SK-N-SH (cell line): ENCODE measurements at regions of chr16 and their contacts with region 1.

Region 1: DNA sequence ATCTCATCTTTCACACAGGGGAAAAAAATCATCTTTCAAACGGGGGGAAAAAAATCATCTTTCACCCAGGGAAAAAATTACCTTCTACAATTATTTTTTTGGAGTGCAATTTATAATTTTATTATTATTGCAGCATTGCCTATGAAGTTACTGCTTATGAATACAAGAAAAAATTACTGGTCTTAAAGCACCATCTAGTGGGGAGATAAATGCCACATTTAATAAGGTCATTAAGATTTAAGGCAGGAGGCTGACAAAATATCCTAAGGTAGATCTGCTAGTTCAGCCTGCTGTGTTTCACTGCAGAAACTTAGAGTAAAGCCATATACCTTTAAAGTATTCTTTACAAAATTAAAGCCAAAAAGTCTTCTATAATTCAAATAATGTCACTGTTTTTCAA is 13.7 kb downstream of the SHCBP1 start:
- DNase-seq: no peak
- H3K4me3 ChIP-seq: no peak overlapping the region
- H3K27ac ChIP-seq: no peak overlapping the region
- H3K4me1 ChIP-seq: no peaks in the 10 kb centered on the region
- H3K27me3 ChIP-seq: no peaks in the 10 kb centered on the region
- CTCF ChIP-seq: peak; percentile 70
- EP300 ChIP-seq: no peak
- RAD21 ChIP-seq: peak; percentile 71

Region 2: DNA sequence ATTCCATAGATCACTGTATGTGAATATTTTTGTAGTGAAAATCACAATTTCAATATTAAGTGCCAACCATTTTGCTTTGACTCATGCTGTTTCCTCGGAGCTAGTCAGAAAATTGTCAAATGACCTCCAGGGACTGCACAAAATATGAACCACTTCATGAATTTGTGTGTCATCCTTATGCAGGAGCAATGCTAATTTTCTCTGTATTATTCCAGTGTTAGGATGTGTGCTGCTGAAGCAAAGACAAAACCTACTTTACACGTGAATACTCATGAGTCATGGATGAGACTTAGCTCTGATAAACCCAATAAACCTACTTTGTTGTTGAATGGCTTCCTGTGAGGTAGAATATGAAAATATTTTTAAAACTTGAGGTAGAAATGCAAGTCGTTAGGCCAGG is 51.6 kb before region 1 on chr16:
- CTCF ChIA-PET with region 1: interaction called, 86 read pairs
- POLR2A ChIA-PET with region 1: no interaction called
- DNase-seq: no peak
- H3K4me3 ChIP-seq: no peak overlapping the region
- H3K27ac ChIP-seq: no peak overlapping the region
- H3K4me1 ChIP-seq: peaks cover 0 to 2% of the 10 kb centered on the region in 2 experiments; a peak in 1 of 4 replicates
- H3K27me3 ChIP-seq: no peaks in the 10 kb centered on the region; the same call in 1 of the 2 replicates
- CTCF ChIP-seq: no peak
- EP300 ChIP-seq: no peak
- RAD21 ChIP-seq: no peak

Region 3: GRCh38 chr16:46583036-46583435 is 24.5 kb before region 1 on chr16:
- CTCF ChIA-PET with region 1: interaction called, 10 read pairs
- POLR2A ChIA-PET with region 1: no interaction called
- DNase-seq: no peak
- H3K4me3 ChIP-seq: no peak overlapping the region
- H3K27ac ChIP-seq: no peak overlapping the region
- H3K4me1 ChIP-seq: no peaks in the 10 kb centered on the region
- H3K27me3 ChIP-seq: no peaks in the 10 kb centered on the region
- CTCF ChIP-seq: no peak
- EP300 ChIP-seq: no peak
- RAD21 ChIP-seq: no peak

Region 4: DNA sequence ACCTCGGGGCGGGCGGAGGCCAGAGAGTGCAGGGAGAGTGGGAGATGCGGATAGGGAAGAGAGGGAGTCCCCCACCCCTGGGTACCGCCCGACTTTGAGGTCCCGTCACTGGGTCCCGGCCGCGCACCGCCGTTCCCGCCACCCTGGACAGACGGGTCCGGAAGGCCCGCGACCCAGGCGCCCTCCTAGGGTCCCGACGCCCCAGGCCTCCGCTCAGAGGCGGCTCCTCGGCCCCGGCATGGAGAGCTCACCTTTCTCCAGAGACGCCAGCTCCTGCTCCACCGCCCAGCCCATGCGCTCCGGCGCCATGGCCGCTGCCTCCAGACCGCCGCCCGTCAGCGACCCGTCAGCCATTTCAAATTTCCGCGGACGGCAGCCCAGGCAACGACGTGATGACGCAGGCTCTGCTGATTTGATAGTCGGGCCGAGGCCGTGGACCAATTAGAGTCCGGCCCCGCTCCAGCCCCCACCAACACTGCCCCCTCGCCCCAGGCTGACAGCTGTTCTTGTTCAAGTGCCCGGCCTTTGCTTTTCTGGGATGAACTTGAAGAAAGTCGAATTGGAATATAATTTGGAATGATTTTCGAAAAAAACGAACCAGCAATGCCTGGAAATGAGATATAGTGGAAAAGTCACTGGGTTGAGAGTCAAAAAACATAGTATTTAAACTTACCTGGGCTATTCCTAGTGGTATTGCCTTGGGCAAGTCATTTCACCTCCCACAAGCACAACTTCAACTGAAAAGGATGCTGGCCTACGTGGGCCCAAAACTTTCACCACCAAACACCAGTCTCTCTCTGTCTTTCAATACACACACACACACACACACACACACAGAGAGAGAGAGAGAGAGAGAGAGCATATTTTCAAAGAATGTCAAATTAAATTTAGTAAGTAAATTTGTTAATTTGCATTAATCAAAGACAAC is 13.7 kb after region 1 on chr16 and contains the start of gene SHCBP1:
- CTCF ChIA-PET with region 1: interaction called, 10 read pairs
- POLR2A ChIA-PET with region 1: no interaction called
- DNase-seq: peak; percentile 98
- H3K4me3 ChIP-seq: peak within 1 kb of the TSS; percentile 82 to 88
- H3K27ac ChIP-seq: peak within 1 kb of the TSS in 1 of 2 experiments; percentile 33; a peak in 1 of 4 replicates
- H3K4me1 ChIP-seq: peaks cover 0 to 6% of the 10 kb centered on the region in 2 experiments; a peak in 2 of 4 replicates
- H3K27me3 ChIP-seq: no peaks in the 10 kb centered on the region
- CTCF ChIP-seq: peak; percentile 15; the same call in 1 of the 2 replicates
- EP300 ChIP-seq: no peak
- RAD21 ChIP-seq: no peak
- polyA plus RNA-seq, gene SHCBP1: 11.1 and 12.5 TPM in 2 replicates